MCF 10A (cell line): ENCODE measurements at regions of chr14 and their contacts with region 1.

Region 1: DNA sequence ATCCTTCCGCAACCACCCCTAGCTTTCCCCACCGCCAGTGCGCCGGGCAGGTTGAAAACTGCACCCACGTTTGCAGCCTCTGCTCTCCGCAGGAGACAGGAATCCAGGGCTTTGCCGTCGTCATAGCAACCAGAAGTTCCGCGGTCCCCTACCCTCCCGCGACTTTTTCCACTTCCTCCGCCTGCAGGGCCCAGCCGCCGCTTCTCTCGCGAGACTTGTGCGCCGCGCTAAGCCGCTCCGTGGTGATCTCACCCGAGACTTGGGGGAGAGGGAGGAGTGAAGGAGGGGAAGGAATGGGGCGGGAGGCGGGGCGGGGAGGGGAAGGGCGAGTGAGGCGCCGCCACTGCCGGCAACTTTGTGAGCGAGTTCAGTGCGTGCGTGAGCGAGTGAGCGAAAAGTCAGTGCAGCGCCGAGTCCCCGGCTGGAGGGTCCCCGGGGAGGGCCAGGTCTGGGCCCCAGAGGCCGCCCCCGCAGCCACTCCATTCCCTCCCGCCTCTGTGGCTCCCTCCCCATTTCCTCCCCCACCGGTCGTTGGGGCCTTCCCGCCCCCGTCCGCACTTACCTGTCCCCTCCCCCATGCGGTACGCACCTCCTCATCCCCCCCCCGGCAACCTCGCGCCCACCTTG is 413.0 kb downstream of the PCNX1 start:
- DNase-seq: peak; percentile 98
- H3K4me3 Mint-ChIP-seq: peak within 1 kb of the TSS; percentile 87
- H3K27ac Mint-ChIP-seq: peak within 1 kb of the TSS; percentile 94
- H3K4me1 Mint-ChIP-seq: peaks cover 32% of the 10 kb centered on the region
- H3K27me3 Mint-ChIP-seq: no peaks in the 10 kb centered on the region
- CTCF ChIP-seq: no peak

Region 2: GRCh38 chr14:71138448-71139293 is 181.5 kb before region 1 on chr14:
- CTCF ChIA-PET with region 1: interaction called, 7 read pairs
- POLR2A ChIA-PET with region 1: interaction called, 4 read pairs
- intact Hi-C with region 1: loop called (anchors 1 kb)
- DNase-seq: peak; percentile 62
- H3K4me3 Mint-ChIP-seq: no peak overlapping the region
- H3K27ac Mint-ChIP-seq: no peak overlapping the region
- H3K4me1 Mint-ChIP-seq: peaks cover 13% of the 10 kb centered on the region
- H3K27me3 Mint-ChIP-seq: no peaks in the 10 kb centered on the region
- CTCF ChIP-seq: peak; percentile 96

Region 3: GRCh38 chr14:71355324-71356201 is 35.3 kb after region 1 on chr14:
- CTCF ChIA-PET with region 1: interaction called, 5 read pairs
- POLR2A ChIA-PET with region 1: interaction called, 108 read pairs
- intact Hi-C with region 1: no loop called
- DNase-seq: peak; percentile 46
- H3K4me3 Mint-ChIP-seq: peak overlapping the region; percentile 54
- H3K27ac Mint-ChIP-seq: peak overlapping the region; percentile 91
- H3K4me1 Mint-ChIP-seq: peaks cover 30% of the 10 kb centered on the region
- H3K27me3 Mint-ChIP-seq: no peaks in the 10 kb centered on the region
- CTCF ChIP-seq: no peak

Region 4: DNA sequence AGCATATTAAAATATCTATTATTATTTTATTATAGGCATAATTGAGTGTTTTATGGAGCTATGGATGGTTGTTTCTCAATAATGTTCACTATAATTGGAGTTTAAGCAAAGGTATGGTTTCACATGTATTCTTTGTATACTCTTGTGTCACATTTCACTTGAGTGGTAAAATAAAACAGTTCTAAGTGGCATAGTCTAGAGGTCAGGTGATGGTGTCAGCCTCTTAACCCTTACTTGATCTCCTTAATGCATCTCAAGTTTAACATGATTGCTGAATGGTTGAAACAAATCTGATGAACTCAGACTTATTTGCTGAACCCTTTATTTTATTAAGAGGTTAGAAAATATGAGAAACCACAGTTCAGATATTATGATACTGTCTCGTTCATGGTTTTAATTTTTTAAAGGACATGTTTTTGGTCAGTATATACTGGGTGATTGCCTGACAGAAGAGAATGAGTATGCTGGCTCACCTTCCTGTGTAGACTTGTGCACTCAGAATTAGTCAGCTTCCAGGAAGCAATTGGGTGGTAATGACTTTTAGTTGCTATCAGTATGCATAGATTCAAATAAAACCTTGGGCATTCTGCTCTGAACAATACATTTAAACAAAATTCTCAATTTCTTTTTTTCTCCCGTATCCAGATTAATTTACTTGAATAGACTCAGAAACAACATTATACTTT is 51.6 kb after region 1 on chr14:
- CTCF ChIA-PET with region 1: interaction called, 4 read pairs
- POLR2A ChIA-PET with region 1: interaction called, 33 read pairs
- intact Hi-C with region 1: loop called (anchors 5 kb)
- DNase-seq: peak; percentile 74
- H3K4me3 Mint-ChIP-seq: peak overlapping the region; percentile 57
- H3K27ac Mint-ChIP-seq: peak overlapping the region; percentile 95
- H3K4me1 Mint-ChIP-seq: peaks cover 11% of the 10 kb centered on the region
- H3K27me3 Mint-ChIP-seq: no peaks in the 10 kb centered on the region
- CTCF ChIP-seq: no peak

Region 5: DNA sequence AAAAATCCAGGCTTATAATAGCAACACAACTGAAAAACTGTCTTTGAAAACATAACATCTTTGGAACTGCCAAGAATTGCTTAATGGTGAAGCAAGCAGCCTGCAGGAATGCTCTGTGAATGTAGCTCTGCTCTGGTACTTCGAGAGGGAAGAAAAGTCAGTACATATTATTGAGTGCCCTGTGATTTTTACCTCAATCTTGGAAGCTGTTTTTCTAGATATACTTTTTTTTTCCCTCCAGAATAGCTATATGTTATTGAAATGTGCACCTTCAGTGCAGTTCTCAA is 95.1 kb after region 1 on chr14:
- CTCF ChIA-PET with region 1: interaction called, 3 read pairs
- POLR2A ChIA-PET with region 1: interaction called, 17 read pairs
- intact Hi-C with region 1: no loop called
- DNase-seq: peak; percentile 47
- H3K4me3 Mint-ChIP-seq: no peak overlapping the region
- H3K27ac Mint-ChIP-seq: no peak overlapping the region
- H3K4me1 Mint-ChIP-seq: peaks cover 23% of the 10 kb centered on the region
- H3K27me3 Mint-ChIP-seq: no peaks in the 10 kb centered on the region
- CTCF ChIP-seq: no peak

Region 6: DNA sequence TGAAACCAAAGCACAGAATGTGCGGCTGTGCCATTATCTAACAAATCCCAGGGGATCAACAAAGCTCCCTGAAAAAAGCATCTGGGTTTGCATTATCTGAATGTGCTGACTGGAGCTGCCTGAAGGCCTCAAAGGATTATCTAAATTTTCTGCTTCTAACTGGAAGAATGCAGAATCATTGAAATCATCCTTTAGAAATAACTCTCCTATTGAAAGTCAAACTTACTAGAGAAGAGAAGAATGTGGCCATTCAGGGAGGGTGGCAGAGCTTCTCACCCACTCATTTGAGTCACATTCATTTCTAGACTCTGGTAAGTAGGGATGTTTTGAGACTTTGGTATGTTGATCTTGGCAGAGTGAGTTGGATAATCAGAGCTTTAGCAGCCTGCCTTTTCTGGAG is 391.4 kb after region 1 on chr14:
- CTCF ChIA-PET with region 1: interaction called, 12 read pairs
- POLR2A ChIA-PET with region 1: interaction called, 9 read pairs
- intact Hi-C with region 1: loop called (anchors 5 kb)
- DNase-seq: peak; percentile 76
- H3K4me3 Mint-ChIP-seq: peak overlapping the region; percentile 38
- H3K27ac Mint-ChIP-seq: peak overlapping the region; percentile 66
- H3K4me1 Mint-ChIP-seq: peaks cover 36% of the 10 kb centered on the region
- H3K27me3 Mint-ChIP-seq: no peaks in the 10 kb centered on the region
- CTCF ChIP-seq: no peak

Region 7: GRCh38 chr14:71764701-71765382 is 444.6 kb after region 1 on chr14:
- CTCF ChIA-PET with region 1: no interaction called
- POLR2A ChIA-PET with region 1: no interaction called
- intact Hi-C with region 1: no loop called
- DNase-seq: no peak
- H3K4me3 Mint-ChIP-seq: no peak overlapping the region
- H3K27ac Mint-ChIP-seq: no peak overlapping the region
- H3K4me1 Mint-ChIP-seq: no peaks in the 10 kb centered on the region
- H3K27me3 Mint-ChIP-seq: no peaks in the 10 kb centered on the region
- CTCF ChIP-seq: no peak

Region 8: DNA sequence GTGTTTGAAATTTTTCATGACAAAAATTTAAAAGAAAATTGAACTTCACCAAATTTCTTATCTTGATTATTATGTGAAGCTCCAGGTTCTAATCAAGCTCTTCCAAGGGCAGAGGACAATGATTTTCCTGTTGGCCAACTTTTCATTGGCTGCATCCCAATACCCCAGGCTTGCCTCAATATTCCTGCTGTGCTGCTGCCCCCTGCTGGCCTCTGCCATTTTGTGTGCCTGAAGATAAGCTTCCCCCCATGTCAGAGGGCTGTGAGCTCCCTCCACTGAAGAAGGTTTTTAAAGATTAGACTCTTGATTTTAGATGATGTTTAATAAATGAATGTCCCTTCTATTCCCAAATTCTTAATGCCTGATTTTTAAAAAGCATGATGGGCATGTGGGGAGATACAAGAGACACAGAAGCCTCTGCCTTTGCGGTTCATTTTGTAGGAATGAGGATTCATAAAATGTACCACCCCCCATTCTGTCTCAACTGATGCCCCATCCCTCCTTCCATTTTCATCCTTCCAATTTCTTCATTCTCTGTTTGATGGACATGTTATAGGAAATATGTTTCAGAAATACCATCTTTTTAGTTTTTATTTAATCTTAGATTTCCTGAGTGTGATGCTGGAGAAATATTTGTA is 535.3 kb after region 1 on chr14:
- CTCF ChIA-PET with region 1: no interaction called
- POLR2A ChIA-PET with region 1: no interaction called
- intact Hi-C with region 1: loop called (anchors 2 kb)
- DNase-seq: peak; percentile 87
- H3K4me3 Mint-ChIP-seq: no peak overlapping the region
- H3K27ac Mint-ChIP-seq: no peak overlapping the region
- H3K4me1 Mint-ChIP-seq: peaks cover 10% of the 10 kb centered on the region
- H3K27me3 Mint-ChIP-seq: peaks cover 42% of the 10 kb centered on the region
- CTCF ChIP-seq: peak; percentile 75